H1 (cell line): ENCODE measurements at regions of chr11 and their contacts with region 1.

Region 1: DNA sequence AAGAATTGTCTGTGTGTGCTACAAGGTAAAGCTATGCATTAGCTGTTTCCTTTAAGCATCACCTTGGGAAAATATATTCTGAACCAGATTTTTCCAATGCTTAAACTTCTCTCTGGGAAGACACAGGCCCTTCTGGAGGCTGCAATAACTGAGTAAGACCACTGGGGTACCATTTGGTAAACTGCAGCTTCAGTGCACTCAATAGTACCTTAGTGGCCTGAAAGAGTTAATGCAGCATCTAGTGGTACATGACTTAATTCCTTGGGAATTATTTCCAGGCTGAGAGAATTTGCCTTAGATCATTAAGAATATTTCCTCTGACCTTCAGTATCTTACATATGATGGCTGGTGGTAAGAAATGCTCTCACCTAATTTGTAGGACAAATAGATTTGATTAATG is 727.4 kb downstream of the DLG2 start:
- DNase-seq: no peak
- H3K4me3 ChIP-seq: no peak overlapping the region
- H3K27ac ChIP-seq: no peak overlapping the region
- H3K4me1 ChIP-seq: no peaks in the 10 kb centered on the region
- H3K27me3 ChIP-seq: no peaks in the 10 kb centered on the region
- CTCF ChIP-seq: peak in 2 of 3 experiments; percentile 81 to 99; a peak in 3 of 4 replicates
- EP300 ChIP-seq: no peak
- POLR2A ChIP-seq: no peak
- RAD21 ChIP-seq: peak; percentile 59 to 69

Region 2: DNA sequence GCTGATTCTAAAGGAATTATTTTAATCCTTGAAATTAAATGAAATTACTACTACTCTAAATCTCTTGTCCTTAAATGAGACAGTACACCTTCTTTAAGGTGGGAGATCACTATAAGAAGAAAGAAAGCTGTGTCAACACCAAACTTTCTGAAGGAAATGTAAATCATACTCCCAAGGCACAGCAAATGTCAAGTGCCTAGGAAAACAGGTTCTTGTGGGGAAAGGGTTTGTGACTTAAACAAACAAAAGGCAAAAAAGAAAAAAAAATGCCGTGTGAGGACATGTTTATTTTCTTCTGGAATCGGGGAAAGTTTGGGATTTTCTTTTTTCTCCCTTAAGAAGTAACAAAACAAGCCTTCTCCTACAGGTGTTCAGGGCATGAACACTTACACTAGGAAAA is 17.7 kb before region 1 on chr11:
- CTCF ChIA-PET with region 1: interaction called, 16 read pairs
- POLR2A ChIA-PET with region 1: no interaction called
- DNase-seq: no peak
- H3K4me3 ChIP-seq: no peak overlapping the region
- H3K27ac ChIP-seq: no peak overlapping the region
- H3K4me1 ChIP-seq: no peaks in the 10 kb centered on the region
- H3K27me3 ChIP-seq: no peaks in the 10 kb centered on the region
- CTCF ChIP-seq: no peak
- EP300 ChIP-seq: no peak
- POLR2A ChIP-seq: no peak
- RAD21 ChIP-seq: no peak

Region 3: DNA sequence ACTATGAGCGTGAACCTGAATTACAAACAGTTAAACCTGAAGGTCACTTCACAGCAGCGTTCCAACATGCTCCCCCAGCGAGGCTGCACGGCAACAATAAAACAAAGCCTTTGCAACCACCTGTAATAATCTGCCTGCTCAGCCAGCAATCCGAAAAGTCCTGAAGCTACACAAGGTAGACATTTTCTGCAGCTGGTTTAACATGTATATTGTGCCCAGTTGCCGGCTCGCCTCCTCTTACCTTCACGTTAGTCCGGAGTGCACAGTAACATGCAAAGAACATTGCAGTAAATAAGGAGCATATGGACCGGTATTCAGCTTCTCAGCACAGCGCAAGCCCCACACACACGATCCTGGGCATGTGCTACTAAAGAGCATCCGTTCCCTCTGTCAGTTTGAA is 23.1 kb after region 1 on chr11:
- CTCF ChIA-PET with region 1: interaction called, 33 read pairs
- POLR2A ChIA-PET with region 1: no interaction called
- DNase-seq: no peak
- H3K4me3 ChIP-seq: peak overlapping the region in 3 of 4 experiments; percentile 4 to 42 (median 19); a peak in 5 of 8 replicates
- H3K27ac ChIP-seq: no peak overlapping the region
- H3K4me1 ChIP-seq: peaks cover 0 to 14% (median 9%) of the 10 kb centered on the region in 4 experiments; a peak in 4 of 7 replicates
- H3K27me3 ChIP-seq: no peaks in the 10 kb centered on the region
- CTCF ChIP-seq: no peak
- EP300 ChIP-seq: no peak
- POLR2A ChIP-seq: no peak
- RAD21 ChIP-seq: no peak

Region 4: GRCh38 chr11:84969103-84969502 is 69.4 kb after region 1 on chr11:
- CTCF ChIA-PET with region 1: no interaction called
- POLR2A ChIA-PET with region 1: no interaction called
- DNase-seq: no peak
- H3K4me3 ChIP-seq: no peak overlapping the region
- H3K27ac ChIP-seq: no peak overlapping the region
- H3K4me1 ChIP-seq: peaks cover 0 to 3% (median 0%) of the 10 kb centered on the region in 4 experiments; a peak in 2 of 7 replicates
- H3K27me3 ChIP-seq: no peaks in the 10 kb centered on the region
- CTCF ChIP-seq: no peak
- EP300 ChIP-seq: no peak
- POLR2A ChIP-seq: no peak
- RAD21 ChIP-seq: no peak